ENCODE measurements at regions of chr17 and their contacts with region 1.

Region 1: GRCh38 chr17:42577532-42578281 is at the start of gene PSMC3IP:
- DNase-seq: peak; percentile 95
- H3K4me3 Mint-ChIP-seq: peak within 1 kb of the TSS; percentile 78
- H3K27ac Mint-ChIP-seq: peak within 1 kb of the TSS; percentile 80
- H3K4me1 Mint-ChIP-seq: peaks cover 24% of the 10 kb centered on the region
- H3K27me3 Mint-ChIP-seq: no peaks in the 10 kb centered on the region
- CTCF ChIP-seq: peak; percentile 26
- total RNA-seq, gene PSMC3IP: 10.3 and 12.0 TPM in 2 replicates

Region 2: GRCh38 chr17:42475835-42476234 is 101.9 kb before region 1 on chr17:
- CTCF ChIA-PET with region 1: no interaction called
- POLR2A ChIA-PET with region 1: no interaction called
- intact Hi-C with region 1: no loop called
- DNase-seq: no peak
- H3K4me3 Mint-ChIP-seq: no peak overlapping the region
- H3K27ac Mint-ChIP-seq: no peak overlapping the region
- H3K4me1 Mint-ChIP-seq: peaks cover 13% of the 10 kb centered on the region
- H3K27me3 Mint-ChIP-seq: no peaks in the 10 kb centered on the region
- CTCF ChIP-seq: no peak

Region 3: GRCh38 chr17:42536048-42536371 is 41.7 kb before region 1 on chr17 and contains the start of gene NAGLU:
- CTCF ChIA-PET with region 1: interaction called, 10 read pairs
- POLR2A ChIA-PET with region 1: interaction called, 12 read pairs
- intact Hi-C with region 1: no loop called
- DNase-seq: peak; percentile 84
- H3K4me3 Mint-ChIP-seq: peak within 1 kb of the TSS; percentile 81
- H3K27ac Mint-ChIP-seq: peak within 1 kb of the TSS; percentile 87
- H3K4me1 Mint-ChIP-seq: peaks cover 18% of the 10 kb centered on the region
- H3K27me3 Mint-ChIP-seq: no peaks in the 10 kb centered on the region
- CTCF ChIP-seq: no peak
- total RNA-seq, gene NAGLU: 21.0 and 29.5 TPM in 2 replicates

Region 4: GRCh38 chr17:42598905-42599304 is 21.2 kb after region 1 on chr17:
- CTCF ChIA-PET with region 1: interaction called, 10 read pairs
- POLR2A ChIA-PET with region 1: interaction called, 4 read pairs
- intact Hi-C with region 1: no loop called
- DNase-seq: no peak
- H3K4me3 Mint-ChIP-seq: no peak overlapping the region
- H3K27ac Mint-ChIP-seq: no peak overlapping the region
- H3K4me1 Mint-ChIP-seq: no peaks in the 10 kb centered on the region
- H3K27me3 Mint-ChIP-seq: no peaks in the 10 kb centered on the region
- CTCF ChIP-seq: no peak

Region 5: GRCh38 chr17:42667123-42667951 is 89.6 kb after region 1 on chr17:
- CTCF ChIA-PET with region 1: interaction called, 13 read pairs
- POLR2A ChIA-PET with region 1: interaction called, 18 read pairs
- intact Hi-C with region 1: no loop called
- DNase-seq: peak; percentile 98
- H3K4me3 Mint-ChIP-seq: peak overlapping the region; percentile 18
- H3K27ac Mint-ChIP-seq: peak overlapping the region; percentile 61
- H3K4me1 Mint-ChIP-seq: peaks cover 29% of the 10 kb centered on the region
- H3K27me3 Mint-ChIP-seq: no peaks in the 10 kb centered on the region
- CTCF ChIP-seq: no peak

Region 6: GRCh38 chr17:42720996-42721583 is 143.4 kb after region 1 on chr17:
- CTCF ChIA-PET with region 1: interaction called, 16 read pairs
- POLR2A ChIA-PET with region 1: no interaction called
- intact Hi-C with region 1: loop called (anchors 2 kb)
- DNase-seq: peak; percentile 71
- H3K4me3 Mint-ChIP-seq: no peak overlapping the region
- H3K27ac Mint-ChIP-seq: no peak overlapping the region
- H3K4me1 Mint-ChIP-seq: no peaks in the 10 kb centered on the region
- H3K27me3 Mint-ChIP-seq: no peaks in the 10 kb centered on the region
- CTCF ChIP-seq: peak; percentile 62